Colonic mucosa (tissue), 4 donors: ENCODE measurements at regions of chr12 and their contacts with region 1.

Region 1: DNA sequence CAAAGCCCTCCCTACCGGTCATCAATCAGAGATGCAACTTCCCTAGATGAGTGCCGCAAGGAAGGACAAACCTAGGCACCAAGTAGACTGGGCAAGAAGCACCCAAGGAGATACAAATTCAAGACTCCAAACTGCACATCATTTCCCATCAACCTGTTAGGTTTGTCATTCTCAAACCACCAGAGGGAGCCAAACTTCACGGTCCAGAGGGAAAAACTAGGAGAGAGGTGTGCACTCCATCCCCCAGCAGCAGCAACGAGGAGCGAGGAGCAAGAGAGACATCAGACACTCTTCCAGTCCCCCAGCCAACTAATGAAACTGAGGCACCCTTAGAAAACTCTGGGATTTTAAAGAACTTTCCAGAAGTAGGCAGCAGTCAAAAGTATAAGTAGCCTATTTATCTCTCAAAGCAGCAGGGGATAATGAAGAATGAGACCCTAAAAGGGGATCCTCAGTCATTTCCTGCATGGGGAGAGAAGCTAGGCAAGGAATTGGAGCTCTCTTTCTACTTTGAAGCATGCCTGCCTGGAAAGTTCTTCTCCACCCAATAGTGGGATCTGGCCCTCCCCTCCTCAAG is 37.0 kb upstream of the NT5DC3 start:
- DNase-seq: peak; percentile 66
- H3K4me3 ChIP-seq: no peak overlapping the region
- H3K27ac ChIP-seq: no peak overlapping the region
- H3K4me1 ChIP-seq: no peaks in the 10 kb centered on the region
- H3K27me3 ChIP-seq: no peaks in the 10 kb centered on the region
- CTCF ChIP-seq: peak; percentile 59

Region 2: DNA sequence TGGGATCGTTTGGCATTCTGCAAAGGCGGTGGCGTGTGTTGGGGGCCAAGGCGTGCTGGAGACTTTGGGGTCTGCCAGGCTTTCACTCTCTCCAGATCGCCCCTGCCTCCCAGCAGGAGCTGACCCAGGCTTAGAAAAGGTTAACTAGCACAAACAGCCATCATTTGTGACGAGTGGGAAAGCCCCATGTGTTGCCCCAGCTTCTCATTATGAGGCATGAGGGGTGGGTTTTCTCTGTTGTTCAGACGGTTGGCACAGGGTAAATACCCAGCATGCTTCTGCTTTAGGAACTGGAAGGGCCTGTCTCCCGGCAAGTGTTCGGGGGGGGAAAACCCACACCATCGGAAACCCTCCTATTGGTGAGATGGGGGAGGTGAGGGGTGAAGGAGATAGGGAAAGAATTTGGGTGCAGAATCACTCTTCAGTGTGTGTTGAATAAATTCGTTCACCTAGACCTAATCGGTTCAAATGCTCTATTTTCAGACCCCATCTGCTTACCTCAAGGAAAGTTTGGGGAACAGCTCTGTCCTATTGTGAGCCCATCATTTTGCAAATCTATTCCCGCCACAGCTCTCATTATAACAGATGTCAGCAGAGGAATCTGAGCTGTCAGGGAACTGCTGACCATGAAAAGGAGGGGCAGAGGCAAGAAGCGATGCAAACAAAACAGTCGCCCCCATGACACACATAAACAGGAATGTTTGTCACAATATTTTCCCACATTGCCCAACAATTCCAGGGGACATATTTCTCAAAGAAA is 347.5 kb before region 1 on chr12:
- intact Hi-C with region 1: no loop called
- DNase-seq: no peak
- H3K4me3 ChIP-seq: no peak overlapping the region
- H3K27ac ChIP-seq: no peak overlapping the region
- H3K4me1 ChIP-seq: no peaks in the 10 kb centered on the region
- H3K27me3 ChIP-seq: no peaks in the 10 kb centered on the region
- CTCF ChIP-seq: no peak

Region 3: DNA sequence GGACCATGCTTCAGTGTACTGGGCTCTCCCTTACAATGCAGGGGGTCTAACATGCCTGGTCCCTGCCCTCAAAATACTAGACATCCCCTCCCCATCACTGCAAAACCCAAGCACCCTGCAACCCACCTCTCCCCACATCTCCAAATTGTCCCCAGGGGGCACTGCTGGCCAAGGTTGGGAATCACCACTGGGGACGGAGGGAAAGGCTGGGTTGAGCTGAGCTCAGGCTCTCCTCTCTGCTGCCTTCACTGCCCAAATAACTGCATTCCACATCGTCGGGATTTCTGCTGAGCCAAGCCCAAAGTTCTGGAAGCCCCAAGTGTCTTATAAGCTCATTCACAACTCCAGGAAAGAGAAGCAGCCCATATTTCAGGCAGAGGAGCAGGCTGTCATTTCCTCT is 106.6 kb before region 1 on chr12:
- intact Hi-C with region 1: loop called (anchors 5 kb)
- DNase-seq: peak; percentile 37
- H3K4me3 ChIP-seq: no peak overlapping the region
- H3K27ac ChIP-seq: no peak overlapping the region
- H3K4me1 ChIP-seq: no peaks in the 10 kb centered on the region
- H3K27me3 ChIP-seq: no peaks in the 10 kb centered on the region
- CTCF ChIP-seq: peak; percentile 16

Region 4: DNA sequence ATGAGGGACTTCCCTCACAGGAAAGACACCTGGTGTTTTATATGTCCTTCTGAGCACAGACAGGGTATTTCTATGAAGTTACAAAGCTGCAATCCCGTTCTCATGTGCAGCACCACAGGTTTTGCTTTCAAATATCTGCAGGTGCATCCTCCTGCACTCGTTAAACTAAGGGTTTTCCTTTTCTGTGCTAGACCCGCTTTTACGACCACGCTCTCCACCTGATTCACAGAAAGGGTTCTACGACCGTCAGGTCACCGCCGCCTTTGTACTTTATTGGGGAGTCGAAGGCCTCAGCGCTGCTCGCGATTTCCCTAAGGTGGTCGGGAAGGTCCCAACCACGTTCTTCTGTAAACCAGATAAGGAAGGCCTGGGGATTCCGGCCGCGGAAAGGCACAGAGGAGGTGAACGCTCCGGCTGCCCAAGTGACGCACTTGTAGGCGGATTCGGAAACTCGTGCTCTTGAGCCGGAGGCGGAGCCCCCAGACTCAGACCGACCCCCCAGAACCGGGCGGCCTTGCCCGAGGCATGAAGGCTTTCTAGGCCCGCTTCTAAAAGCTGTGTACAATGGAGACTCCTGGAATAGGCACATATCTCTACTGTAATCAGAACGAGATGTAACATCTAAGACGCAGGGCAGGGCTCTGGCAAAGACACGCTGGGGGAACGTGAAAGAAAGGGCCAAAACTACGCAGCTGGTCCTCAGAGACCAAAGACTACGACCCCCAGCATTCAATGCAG is 51.2 kb after region 1 on chr12:
- intact Hi-C with region 1: loop called (anchors 5 kb)
- DNase-seq: peak; percentile 86
- H3K4me3 ChIP-seq: peak overlapping the region; percentile 48
- H3K27ac ChIP-seq: peak overlapping the region; percentile 96
- H3K4me1 ChIP-seq: peaks cover 13% of the 10 kb centered on the region
- H3K27me3 ChIP-seq: no peaks in the 10 kb centered on the region
- CTCF ChIP-seq: no peak

Region 5: GRCh38 chr12:104108755-104109445 is 230.9 kb after region 1 on chr12:
- intact Hi-C with region 1: loop called (anchors 5 kb)
- DNase-seq: peak; percentile 88
- H3K4me3 ChIP-seq: no peak overlapping the region
- H3K27ac ChIP-seq: no peak overlapping the region
- H3K4me1 ChIP-seq: no peaks in the 10 kb centered on the region
- H3K27me3 ChIP-seq: no peaks in the 10 kb centered on the region
- CTCF ChIP-seq: peak; percentile 86